Breast epithelium (tissue), 4 donors: ENCODE measurements at regions of chr2 and their contacts with region 1.

Region 1: DNA sequence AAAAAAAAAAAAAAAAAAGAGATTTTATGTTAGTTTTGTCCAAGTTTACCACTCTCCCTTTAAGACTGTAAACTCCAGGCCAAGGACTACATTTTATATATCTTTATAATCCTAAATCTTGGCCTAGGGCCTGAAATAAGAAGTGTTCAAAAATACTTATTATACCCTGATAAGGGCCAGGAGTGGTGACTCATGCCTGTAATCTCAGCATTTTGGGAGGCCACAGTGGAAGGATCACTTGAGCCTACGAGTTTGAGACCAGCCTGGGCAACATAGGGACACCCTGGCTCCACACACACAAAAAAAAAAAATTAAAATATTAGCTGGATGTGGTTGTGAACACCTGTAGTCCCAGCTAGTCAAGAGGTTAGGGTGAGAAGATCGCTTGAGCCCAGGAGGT is 12.7 kb downstream of the TRIP12 start:
- DNase-seq: no peak
- H3K4me3 ChIP-seq: no peak overlapping the region
- H3K27ac ChIP-seq: no peak overlapping the region
- H3K4me1 ChIP-seq: no peaks in the 10 kb centered on the region
- H3K27me3 ChIP-seq: no peaks in the 10 kb centered on the region
- CTCF ChIP-seq: no peak
- POLR2A ChIP-seq: no peak

Region 2: GRCh38 chr2:229798446-229799155 is 110.5 kb before region 1 on chr2:
- intact Hi-C with region 1: loop called (anchors 5 kb)
- DNase-seq: no peak
- H3K4me3 ChIP-seq: no peak overlapping the region
- H3K27ac ChIP-seq: peak overlapping the region in 1 of 2 donors; percentile 52
- H3K4me1 ChIP-seq: peaks cover 0 to 4% of the 10 kb centered on the region in 2 donors
- H3K27me3 ChIP-seq: no peaks in the 10 kb centered on the region
- CTCF ChIP-seq: no peak
- POLR2A ChIP-seq: no peak

Region 3: GRCh38 chr2:229873123-229873581 is 35.9 kb before region 1 on chr2:
- intact Hi-C with region 1: no loop called
- DNase-seq: no peak
- H3K4me3 ChIP-seq: no peak overlapping the region
- H3K27ac ChIP-seq: no peak overlapping the region
- H3K4me1 ChIP-seq: peaks cover 0 to 5% of the 10 kb centered on the region in 2 donors
- H3K27me3 ChIP-seq: no peaks in the 10 kb centered on the region
- CTCF ChIP-seq: no peak
- POLR2A ChIP-seq: no peak

Region 4: DNA sequence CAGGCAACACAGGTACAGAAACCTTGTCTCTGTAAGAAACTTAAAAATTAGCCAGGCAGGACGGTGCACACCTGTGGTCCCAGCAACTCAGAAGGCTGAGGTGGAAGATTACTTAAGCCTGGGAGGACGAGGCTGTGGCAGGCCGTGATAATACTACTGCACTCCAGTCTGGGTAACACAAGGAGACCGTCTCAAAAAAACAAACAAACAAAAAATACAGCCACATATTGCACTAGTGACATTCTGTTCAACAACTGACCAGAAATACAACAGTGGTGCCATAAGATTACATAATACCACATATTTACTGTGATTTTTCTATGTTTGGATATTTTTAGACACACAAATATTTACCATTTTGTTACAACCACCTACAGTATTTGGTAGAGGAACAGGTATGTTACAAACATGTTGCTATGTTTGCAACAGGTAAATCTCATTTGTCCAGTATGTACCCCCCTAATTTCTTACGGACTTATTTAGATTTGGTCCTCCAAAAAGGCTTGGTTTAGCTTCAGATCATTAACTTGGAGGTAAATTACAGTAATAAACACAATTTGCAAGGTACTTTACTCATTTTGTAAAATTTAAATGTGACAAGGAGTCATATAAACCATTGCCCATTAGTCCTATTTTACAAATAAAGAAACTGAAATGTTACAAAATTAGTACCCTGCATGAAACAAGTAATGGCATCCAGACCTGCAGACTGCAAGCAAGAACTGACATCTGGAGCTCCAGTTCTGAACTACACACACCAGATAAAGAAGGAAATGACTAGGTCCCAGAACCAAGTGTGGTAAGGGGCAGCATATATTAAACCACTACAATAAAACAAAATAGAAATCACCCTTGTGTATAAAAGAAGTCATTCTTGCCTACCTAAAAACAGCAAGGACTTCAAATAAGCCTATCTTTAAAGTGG is 24.1 kb before region 1 on chr2:
- intact Hi-C with region 1: no loop called
- DNase-seq: no peak
- H3K4me3 ChIP-seq: no peak overlapping the region
- H3K27ac ChIP-seq: no peak overlapping the region
- H3K4me1 ChIP-seq: no peaks in the 10 kb centered on the region
- H3K27me3 ChIP-seq: no peaks in the 10 kb centered on the region
- CTCF ChIP-seq: no peak
- POLR2A ChIP-seq: no peak

Region 5: DNA sequence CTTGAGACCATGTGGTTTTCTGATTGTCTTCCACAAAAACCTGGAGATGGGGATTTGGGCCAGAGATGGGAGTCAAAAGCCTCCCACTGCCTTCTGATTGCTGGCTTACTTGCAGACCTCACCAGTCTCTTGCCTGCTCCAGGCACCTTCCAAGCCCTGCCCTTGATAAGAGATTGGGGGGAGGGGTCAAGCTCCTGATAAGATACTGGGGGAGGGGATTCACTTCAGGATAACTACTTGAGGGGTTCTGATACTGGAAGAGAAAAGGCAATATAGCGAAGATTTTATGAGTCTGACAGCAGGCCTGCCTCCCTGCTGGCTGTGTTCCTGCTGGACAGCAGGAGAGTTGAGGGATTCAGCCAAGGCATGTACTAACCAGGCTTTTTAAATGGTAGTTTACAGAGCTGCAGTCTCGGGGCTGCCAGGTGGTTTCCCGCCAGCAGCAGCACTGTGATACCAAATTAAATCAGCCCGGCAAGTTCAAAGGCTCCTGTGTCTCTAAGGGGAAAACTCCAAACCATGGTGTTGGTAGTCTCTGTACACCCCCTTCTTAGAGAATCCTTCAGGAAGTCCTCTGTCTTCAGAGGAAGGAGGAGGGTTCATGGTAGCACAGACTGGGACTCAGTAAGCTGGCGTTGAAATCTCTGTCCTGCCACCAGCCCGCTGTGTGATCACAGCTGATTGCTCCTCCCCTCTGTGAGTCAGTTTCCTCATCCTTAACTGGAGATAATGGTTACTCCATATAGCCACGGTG is 71.5 kb after region 1 on chr2:
- intact Hi-C with region 1: no loop called
- DNase-seq: peak in 1 of 2 donors; percentile 20
- H3K4me3 ChIP-seq: peak overlapping the region in 1 of 3 donors; percentile 4
- H3K27ac ChIP-seq: peak overlapping the region; percentile 28 to 60
- H3K4me1 ChIP-seq: no peaks in the 10 kb centered on the region
- H3K27me3 ChIP-seq: no peaks in the 10 kb centered on the region
- CTCF ChIP-seq: no peak
- POLR2A ChIP-seq: no peak